Naive thymus-derived CD4-positive, alpha-beta T cell (primary cell): ENCODE measurements at regions of chr21 and their contacts with region 1.

Region 1: GRCh38 chr21:36504067-36505058 is 24.4 kb upstream of the CLDN14 start:
- DNase-seq: peak in 7 of 9 donors; percentile 8 to 56 (median 40)
- ATAC-seq: peak; percentile 46
- H3K4me3 ChIP-seq: no peak overlapping the region
- H3K4me3 Mint-ChIP-seq: no peak overlapping the region
- H3K27ac ChIP-seq: no peak overlapping the region
- H3K27ac Mint-ChIP-seq: no peak overlapping the region
- H3K4me1 ChIP-seq: no peaks in the 10 kb centered on the region
- H3K4me1 Mint-ChIP-seq: no peaks in the 10 kb centered on the region
- H3K27me3 ChIP-seq: no peaks in the 10 kb centered on the region
- H3K27me3 Mint-ChIP-seq: peaks cover 0 to 17% (median 10%) of the 10 kb centered on the region in 5 donors

Region 2: GRCh38 chr21:36684957-36685714 is 180.8 kb after region 1 on chr21:
- CTCF ChIA-PET with region 1: no interaction called
- POLR2A ChIA-PET with region 1: no interaction called
- intact Hi-C with region 1: no loop called
- DNase-seq: no peak
- ATAC-seq: no peak
- H3K4me3 ChIP-seq: no peak overlapping the region
- H3K4me3 Mint-ChIP-seq: no peak overlapping the region
- H3K27ac ChIP-seq: no peak overlapping the region
- H3K27ac Mint-ChIP-seq: no peak overlapping the region
- H3K4me1 ChIP-seq: no peaks in the 10 kb centered on the region
- H3K4me1 Mint-ChIP-seq: no peaks in the 10 kb centered on the region
- H3K27me3 ChIP-seq: peaks cover 0 to 3% of the 10 kb centered on the region in 2 donors
- H3K27me3 Mint-ChIP-seq: peaks cover 57 to 91% (median 89%) of the 10 kb centered on the region in 5 donors

Region 3: GRCh38 chr21:36854391-36854790 is 350.0 kb after region 1 on chr21:
- CTCF ChIA-PET with region 1: no interaction called
- POLR2A ChIA-PET with region 1: no interaction called
- intact Hi-C with region 1: loop called in 1 of 2 experiments (anchors 2 kb)
- DNase-seq: peak in 3 of 9 donors; percentile 5 to 21 (median 13)
- ATAC-seq: no peak
- H3K4me3 ChIP-seq: no peak overlapping the region
- H3K4me3 Mint-ChIP-seq: no peak overlapping the region
- H3K27ac ChIP-seq: no peak overlapping the region
- H3K27ac Mint-ChIP-seq: peak overlapping the region in 1 of 9 donors; percentile 22
- H3K4me1 ChIP-seq: no peaks in the 10 kb centered on the region
- H3K4me1 Mint-ChIP-seq: peaks cover 0 to 16% (median 3%) of the 10 kb centered on the region in 7 donors
- H3K27me3 ChIP-seq: no peaks in the 10 kb centered on the region
- H3K27me3 Mint-ChIP-seq: no peaks in the 10 kb centered on the region